ENCODE measurements at regions of chr3 and their contacts with region 1.

Region 1: DNA sequence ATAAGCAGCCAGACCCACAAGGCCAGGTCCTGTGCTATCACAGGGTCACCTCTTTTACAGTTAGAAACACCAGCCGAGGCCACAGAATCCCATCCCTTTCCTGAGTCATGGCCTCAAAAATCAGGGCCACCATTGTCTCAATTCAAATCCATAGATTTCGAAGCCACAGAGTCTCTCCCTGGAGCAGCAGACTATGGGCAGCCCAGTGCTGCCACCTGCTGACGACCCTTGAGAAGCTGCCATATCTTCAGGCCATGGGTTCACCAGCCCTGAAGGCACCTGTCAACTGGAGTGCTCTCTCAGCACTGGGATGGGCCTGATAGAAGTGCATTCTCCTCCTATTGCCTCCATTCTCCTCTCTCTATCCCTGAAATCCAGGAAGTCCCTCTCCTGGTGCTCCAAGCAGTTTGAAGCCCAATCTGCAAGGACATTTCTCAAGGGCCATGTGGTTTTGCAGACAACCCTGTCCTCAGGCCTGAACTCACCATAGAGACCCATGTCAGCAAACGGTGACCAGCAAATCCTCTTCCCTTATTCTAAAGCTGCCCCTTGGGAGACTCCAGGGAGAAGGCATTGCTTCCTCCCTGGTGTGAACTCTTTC is 39.6 kb downstream of the TGM4 start:
- ATAC-seq: peak; percentile 60 to 85 (median 75)
- H3K4me3 ChIP-seq: no peak overlapping the region
- H3K27ac ChIP-seq: no peak overlapping the region
- H3K4me1 ChIP-seq: peaks cover 0 to 4% of the 10 kb centered on the region in 2 donors

Region 2: GRCh38 chr3:44529927-44530326 is 384.0 kb before region 1 on chr3:
- in situ Hi-C with region 1: loop called in 2 of 9 experiments (anchors 25 kb)
- ATAC-seq: peak in 1 of 8 experiments; percentile 33
- H3K4me3 ChIP-seq: no peak overlapping the region
- H3K27ac ChIP-seq: no peak overlapping the region
- H3K4me1 ChIP-seq: peaks cover 5 to 12% of the 10 kb centered on the region in 2 donors

Region 3: DNA sequence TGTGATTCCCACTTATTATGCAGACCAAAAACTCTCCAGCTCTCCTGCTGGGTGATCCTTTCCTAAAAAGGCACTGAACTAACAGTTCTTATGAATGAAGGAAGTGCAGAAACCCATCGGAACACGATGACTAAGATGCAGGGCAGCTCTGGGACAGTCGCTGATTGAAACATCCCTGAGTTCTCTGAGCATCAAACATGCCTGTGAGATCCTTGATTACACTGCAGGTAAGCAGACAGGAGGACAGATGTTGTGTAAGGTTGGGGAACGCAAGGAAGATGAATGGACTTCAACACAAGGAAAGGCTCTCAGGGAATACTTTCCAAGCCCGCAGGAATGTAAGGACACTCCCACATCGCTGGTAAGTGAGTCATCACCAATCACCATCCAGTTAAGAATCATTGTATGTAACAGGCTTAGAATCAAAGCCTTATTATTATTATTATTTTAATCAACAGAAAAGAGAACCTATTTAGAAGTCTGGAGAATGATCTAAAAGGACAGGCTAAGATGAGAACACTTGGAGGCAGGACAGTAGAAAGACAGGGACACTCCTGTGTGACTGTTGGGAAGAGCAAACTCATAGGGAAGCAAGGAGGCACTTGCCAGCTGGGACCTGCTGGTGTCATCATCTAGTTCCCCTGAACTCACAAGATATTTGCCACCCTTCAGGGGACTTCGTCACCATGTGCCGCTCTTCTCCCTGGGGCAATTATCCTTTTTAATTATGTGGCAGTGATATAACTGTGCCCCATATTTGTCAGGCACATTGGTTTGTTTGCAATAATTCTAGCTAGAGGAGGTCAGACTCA is 286.1 kb after region 1 on chr3:
- in situ Hi-C with region 1: no loop called
- ATAC-seq: peak in 6 of 8 experiments; percentile 26 to 99 (median 60)
- H3K4me3 ChIP-seq: no peak overlapping the region
- H3K27ac ChIP-seq: no peak overlapping the region
- H3K4me1 ChIP-seq: no peaks in the 10 kb centered on the region

Measured in motor neuron (in vitro differentiated cells).